A549 (cell line): ENCODE measurements at regions of chr11 and their contacts with region 1.

Region 1: DNA sequence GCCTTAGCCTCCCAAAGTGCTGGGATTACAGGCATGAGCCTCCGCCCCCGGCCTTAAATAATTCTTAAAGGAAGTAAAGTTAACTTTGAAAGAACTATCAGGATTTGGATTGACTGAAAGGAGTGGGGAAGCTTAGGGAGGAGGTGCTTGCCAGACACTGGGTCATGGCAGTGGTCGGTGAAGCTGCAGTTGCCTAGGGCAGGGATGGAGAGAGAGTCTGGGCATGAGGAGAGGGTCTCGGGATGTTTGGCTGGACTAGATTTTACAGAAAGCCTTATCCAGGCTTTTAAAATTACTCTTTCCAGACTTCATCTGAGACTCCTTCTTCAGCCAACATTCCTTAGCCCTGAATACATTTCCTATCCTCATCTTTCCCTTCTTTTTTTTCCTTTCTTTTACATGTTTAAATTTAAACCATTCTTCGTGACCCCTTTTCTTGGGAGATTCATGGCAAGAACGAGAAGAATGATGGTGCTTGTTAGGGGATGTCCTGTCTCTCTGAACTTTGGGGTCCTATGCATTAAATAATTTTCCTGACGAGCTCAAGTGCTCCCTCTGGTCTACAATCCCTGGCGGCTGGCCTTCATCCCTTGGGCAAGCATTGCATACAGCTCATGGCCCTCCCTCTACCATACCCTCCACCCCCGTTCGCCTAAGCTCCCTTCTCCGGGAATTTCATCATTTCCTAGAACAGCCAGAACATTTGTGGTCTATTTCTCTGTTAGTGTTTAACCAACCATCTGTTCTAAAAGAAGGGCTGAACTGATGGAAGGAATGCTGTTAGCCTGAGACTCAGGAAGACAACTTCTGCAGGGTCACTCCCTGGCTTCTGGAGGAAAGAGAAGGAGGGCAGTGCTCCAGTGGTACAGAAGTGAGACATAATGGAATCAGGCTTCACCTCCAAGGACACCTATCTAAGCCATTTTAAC is at the start of gene NNMT:
- DNase-seq: peak in 1 of 2 experiments; percentile 87
- ATAC-seq: peak; percentile 67 to 72
- H3K4me3 ChIP-seq: peak within 1 kb of the TSS; percentile 75
- H3K27ac ChIP-seq: peak within 1 kb of the TSS; percentile 100
- H3K4me1 ChIP-seq: peaks cover 51% of the 10 kb centered on the region
- CTCF ChIP-seq: no peak
- EP300 ChIP-seq: peak; percentile 35 to 68; a peak in 2 of 5 replicates
- POLR2A ChIP-seq: no peak
- RAD21 ChIP-seq: no peak
- polyA plus RNA-seq, gene NNMT: 285 and 296 TPM in 2 replicates

Region 2: GRCh38 chr11:113831314-113831713 is 464.6 kb before region 1 on chr11:
- CTCF ChIA-PET with region 1: no interaction called
- POLR2A ChIA-PET with region 1: no interaction called
- DNase-seq: no peak
- ATAC-seq: no peak
- H3K4me3 ChIP-seq: no peak overlapping the region
- H3K27ac ChIP-seq: no peak overlapping the region
- H3K4me1 ChIP-seq: no peaks in the 10 kb centered on the region
- CTCF ChIP-seq: no peak
- EP300 ChIP-seq: no peak
- POLR2A ChIP-seq: no peak
- RAD21 ChIP-seq: no peak

Region 3: DNA sequence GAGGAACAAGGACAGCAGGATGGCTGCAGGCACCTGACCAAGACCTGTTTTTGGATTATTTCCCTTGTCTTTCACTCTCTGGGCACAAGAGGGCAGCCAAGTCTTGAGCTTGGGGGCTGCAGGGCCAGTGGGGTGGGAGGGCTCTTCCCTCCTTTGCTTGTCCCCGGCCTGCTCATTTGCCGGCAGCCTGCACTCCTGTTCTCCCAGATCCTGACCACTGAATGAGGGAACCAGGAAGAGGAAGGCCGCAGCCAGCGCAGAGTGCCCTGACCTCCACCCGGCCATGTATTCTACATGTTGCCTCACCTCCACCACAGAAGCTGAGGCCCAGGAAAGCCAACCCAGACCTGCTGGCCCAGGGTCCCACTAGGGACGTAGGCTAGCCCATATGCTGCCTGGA is 15.2 kb before region 1 on chr11:
- CTCF ChIA-PET with region 1: interaction called, 25 read pairs
- POLR2A ChIA-PET with region 1: interaction called, 15 read pairs
- DNase-seq: peak; percentile 67 to 89
- ATAC-seq: peak; percentile 93 to 96
- H3K4me3 ChIP-seq: no peak overlapping the region
- H3K27ac ChIP-seq: peak overlapping the region; percentile 97 to 100
- H3K4me1 ChIP-seq: peaks cover 51% of the 10 kb centered on the region
- CTCF ChIP-seq: peak; percentile 72
- EP300 ChIP-seq: no peak
- POLR2A ChIP-seq: no peak
- RAD21 ChIP-seq: peak; percentile 93 to 94

Region 4: GRCh38 chr11:114307524-114308203 is 11.7 kb after region 1 on chr11:
- CTCF ChIA-PET with region 1: interaction called, 3 read pairs
- POLR2A ChIA-PET with region 1: interaction called, 10 read pairs
- DNase-seq: no peak
- ATAC-seq: peak in 1 of 2 experiments; percentile 33; a peak in 3 of 6 replicates
- H3K4me3 ChIP-seq: peak overlapping the region; percentile 21; the same call in 1 of the 3 replicates
- H3K27ac ChIP-seq: peak overlapping the region; percentile 65 to 79; a peak in 5 of 6 replicates
- H3K4me1 ChIP-seq: peaks cover 60% of the 10 kb centered on the region
- CTCF ChIP-seq: no peak
- EP300 ChIP-seq: no peak
- POLR2A ChIP-seq: no peak
- RAD21 ChIP-seq: no peak

Region 5: DNA sequence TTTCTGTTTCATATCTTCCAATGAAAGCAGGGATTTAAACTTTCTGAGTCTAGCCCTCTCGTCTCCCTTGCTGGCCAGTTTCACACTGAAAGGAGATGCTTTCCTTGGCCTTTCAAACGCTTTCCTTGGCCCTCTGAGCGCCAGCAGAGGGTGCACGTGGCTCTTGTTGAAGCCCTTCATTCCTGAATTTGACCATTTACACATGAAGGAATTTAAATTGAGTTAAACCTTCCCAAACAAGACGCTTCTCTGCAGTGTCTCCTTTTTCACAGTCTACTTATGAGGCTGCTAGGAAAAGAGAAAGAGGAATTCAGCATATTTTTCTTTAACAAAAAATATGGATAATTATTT is 21.8 kb after region 1 on chr11:
- CTCF ChIA-PET with region 1: interaction called, 4 read pairs
- POLR2A ChIA-PET with region 1: interaction called, 12 read pairs
- DNase-seq: peak in 1 of 2 experiments; percentile 70
- ATAC-seq: peak in 1 of 2 experiments; percentile 27; a peak in 3 of 6 replicates
- H3K4me3 ChIP-seq: no peak overlapping the region
- H3K27ac ChIP-seq: peak overlapping the region; percentile 87 to 92
- H3K4me1 ChIP-seq: peaks cover 95% of the 10 kb centered on the region
- CTCF ChIP-seq: peak; percentile 47
- EP300 ChIP-seq: no peak
- POLR2A ChIP-seq: no peak
- RAD21 ChIP-seq: peak; percentile 57 to 61

Region 6: DNA sequence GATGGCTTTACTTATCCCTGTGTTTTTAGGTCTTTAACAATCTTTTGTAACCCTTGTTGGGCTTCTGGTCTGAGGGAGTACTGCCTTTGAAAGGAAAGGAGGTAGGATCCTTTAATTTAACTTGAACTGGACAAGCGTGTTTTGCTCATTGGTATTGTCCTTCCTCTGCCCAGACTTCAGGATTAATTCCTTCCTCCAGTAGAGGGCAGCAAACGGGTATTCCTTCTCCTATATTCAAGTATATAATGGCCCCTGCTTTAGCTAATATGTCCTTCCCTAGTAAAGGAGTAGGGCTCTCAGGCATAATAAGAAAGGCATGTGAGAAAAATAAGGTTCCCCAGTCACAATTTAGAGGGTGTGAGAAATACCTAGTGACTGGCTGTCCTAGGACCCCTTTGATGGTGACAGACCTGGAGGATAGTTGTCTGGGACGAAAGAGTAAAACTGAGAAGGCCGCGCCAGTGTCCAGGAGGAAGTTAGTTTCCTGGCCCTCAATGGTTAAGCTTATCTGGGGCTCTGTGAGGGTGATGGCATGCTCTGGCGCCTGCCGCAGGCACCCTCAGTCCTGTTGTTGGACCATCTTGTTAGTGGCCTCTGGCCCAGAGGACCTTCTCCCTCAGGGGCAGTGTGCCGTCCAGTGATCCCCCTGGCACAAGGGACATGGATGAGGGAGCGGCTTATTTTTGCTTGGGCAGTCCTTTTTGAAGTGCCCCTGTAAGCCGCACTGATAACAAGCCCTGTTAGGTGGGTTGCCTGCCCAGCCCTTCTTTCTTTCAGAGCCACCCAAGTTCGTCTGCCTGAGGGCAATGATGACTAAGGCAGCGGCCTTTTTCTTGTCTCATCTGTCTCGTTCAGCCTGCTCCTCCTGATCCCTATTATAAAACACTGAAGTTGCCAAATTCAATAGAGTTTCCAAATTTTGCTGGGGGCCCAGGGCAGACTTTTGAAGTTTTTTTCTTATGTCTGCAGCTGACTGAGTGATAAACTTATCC is 52.6 kb after region 1 on chr11:
- CTCF ChIA-PET with region 1: no interaction called
- POLR2A ChIA-PET with region 1: no interaction called
- DNase-seq: peak in 1 of 2 experiments; percentile 59
- ATAC-seq: peak in 1 of 2 experiments; percentile 78; a peak in 4 of 6 replicates
- H3K4me3 ChIP-seq: no peak overlapping the region
- H3K27ac ChIP-seq: peak overlapping the region in 1 of 2 experiments; percentile 30; a peak in 1 of 6 replicates
- H3K4me1 ChIP-seq: no peaks in the 10 kb centered on the region
- CTCF ChIP-seq: peak; percentile 29; the same call in 2 of the 3 replicates
- EP300 ChIP-seq: no peak
- POLR2A ChIP-seq: no peak
- RAD21 ChIP-seq: peak in 1 of 2 experiments; percentile 47; a peak in 1 of 5 replicates

Region 7: DNA sequence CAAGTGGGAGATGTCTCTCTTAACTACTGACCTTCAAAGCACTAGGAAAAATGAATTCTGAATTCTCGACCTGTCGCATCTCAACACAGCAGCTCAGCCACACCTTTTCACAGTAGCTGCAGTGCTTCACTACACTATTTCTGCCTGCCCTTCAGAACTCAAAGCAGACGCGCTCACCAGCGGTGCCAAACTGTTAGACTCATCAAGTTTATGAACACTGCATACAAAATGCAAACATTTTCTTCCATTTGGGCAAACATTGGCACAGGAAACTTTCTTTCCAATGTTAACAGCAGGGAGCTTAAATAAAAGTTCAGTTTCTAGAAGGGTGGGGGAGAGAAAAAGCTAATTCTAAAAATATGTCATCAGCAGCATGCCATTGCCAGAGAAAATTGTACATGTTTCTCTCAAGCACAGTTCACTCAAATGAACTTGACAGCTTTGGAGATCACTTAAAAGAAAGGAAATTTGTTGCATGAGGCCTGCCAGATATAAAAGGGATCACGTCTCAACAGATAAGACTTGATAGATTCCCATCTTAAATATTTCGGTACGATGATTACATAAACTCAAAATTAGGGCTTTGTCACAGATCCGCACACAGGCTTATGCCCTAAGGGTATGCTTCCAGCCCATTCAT is 1125.5 kb after region 1 on chr11:
- CTCF ChIA-PET with region 1: no interaction called
- POLR2A ChIA-PET with region 1: interaction called, 10 read pairs
- DNase-seq: no peak
- ATAC-seq: no peak
- H3K4me3 ChIP-seq: no peak overlapping the region
- H3K27ac ChIP-seq: no peak overlapping the region
- H3K4me1 ChIP-seq: 0 out of 3 replicates have a peak, but pooled peaks cover 4% of the 10 kb centered on the region
- CTCF ChIP-seq: no peak
- EP300 ChIP-seq: no peak
- POLR2A ChIP-seq: no peak
- RAD21 ChIP-seq: no peak